GM12878 (cell line): ENCODE measurements at regions of chr12 and their contacts with region 1.

Region 1: DNA sequence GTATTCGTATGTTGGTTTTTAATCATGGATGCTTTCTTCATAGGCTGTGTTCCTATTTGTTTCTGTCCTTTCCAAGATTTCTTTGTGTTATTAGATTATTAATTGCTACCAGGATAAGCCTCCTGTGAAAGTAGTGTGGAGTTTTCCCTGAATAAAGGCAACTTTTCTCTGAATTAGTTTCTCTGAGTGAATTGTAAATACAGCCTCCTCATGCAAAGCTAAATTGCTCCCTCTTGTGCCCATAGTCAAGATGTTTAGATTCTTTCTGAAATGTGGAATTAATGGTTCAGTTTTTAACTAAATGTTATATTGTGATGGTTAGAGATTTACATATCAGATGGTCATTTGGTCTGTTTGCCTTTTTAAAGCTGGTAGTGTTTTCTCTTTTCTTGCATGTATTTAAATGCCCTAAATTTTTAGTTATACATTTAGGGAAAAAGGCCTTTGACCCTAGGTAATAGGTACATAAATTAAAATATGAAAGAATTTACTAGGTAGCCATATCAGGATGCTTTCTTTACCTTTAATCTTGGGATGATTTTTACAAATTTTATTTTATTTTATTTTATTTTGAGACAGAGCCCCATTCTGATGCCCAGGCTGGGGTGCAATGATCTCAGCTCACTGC is 8.9 kb downstream of the APAF1 start:
- DNase-seq: no peak
- ATAC-seq: peak; percentile 68
- H3K4me3 ChIP-seq: no peak overlapping the region
- H3K27ac ChIP-seq: no peak overlapping the region
- H3K4me1 ChIP-seq: no peaks in the 10 kb centered on the region; the same call in 1 of the 2 replicates
- H3K27me3 ChIP-seq: no peaks in the 10 kb centered on the region
- CTCF ChIP-seq: peak; percentile 52 to 77 (median 54)
- EP300 ChIP-seq: no peak
- POLR2A ChIP-seq: no peak
- RAD21 ChIP-seq: peak; percentile 87

Region 2: GRCh38 chr12:98424726-98425401 is 229.1 kb before region 1 on chr12:
- CTCF ChIA-PET with region 1: interaction called, 3 read pairs
- POLR2A ChIA-PET with region 1: no interaction called
- RAD21 ChIA-PET with region 1: no interaction called
- SMC1A ChIA-PET with region 1: interaction called, 3 read pairs
- in situ Hi-C with region 1: no loop called
- intact Hi-C with region 1: loop called (anchors 2 kb)
- DNase-seq: no peak
- ATAC-seq: peak; percentile 95
- H3K4me3 ChIP-seq: no peak overlapping the region
- H3K27ac ChIP-seq: no peak overlapping the region
- H3K4me1 ChIP-seq: no peaks in the 10 kb centered on the region
- H3K27me3 ChIP-seq: no peaks in the 10 kb centered on the region
- CTCF ChIP-seq: peak; percentile 62 to 71 (median 67)
- EP300 ChIP-seq: no peak
- POLR2A ChIP-seq: no peak
- RAD21 ChIP-seq: peak; percentile 50

Region 3: DNA sequence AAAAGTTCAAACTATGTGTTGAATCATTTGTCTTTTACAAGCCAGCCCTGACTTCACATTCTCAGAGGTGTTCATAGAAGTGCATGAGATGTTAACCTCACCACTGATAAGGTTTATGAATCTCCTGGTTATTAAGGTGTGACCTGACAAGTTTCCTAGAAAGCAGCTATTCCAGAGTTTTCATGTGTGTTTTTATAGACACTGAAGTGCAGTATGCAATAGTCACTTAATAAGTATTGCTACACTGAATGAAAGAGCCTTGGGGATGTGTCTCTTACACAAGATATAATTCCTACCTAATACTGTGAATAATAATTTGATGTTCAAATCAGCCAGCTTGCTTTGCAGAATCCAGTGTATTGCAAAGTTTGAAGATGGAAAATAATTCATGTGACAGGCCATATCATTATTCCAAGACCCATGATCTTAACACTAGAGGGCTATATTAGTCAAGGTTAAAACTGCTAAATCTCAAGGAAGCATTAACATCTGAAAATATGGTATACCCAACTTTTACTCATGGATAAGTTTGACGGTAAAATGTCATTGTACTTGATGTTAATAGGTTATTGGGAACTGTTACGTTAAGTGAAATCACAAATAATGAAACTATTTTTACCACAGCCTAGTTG is 47.5 kb before region 1 on chr12:
- CTCF ChIA-PET with region 1: interaction called, 19 read pairs
- POLR2A ChIA-PET with region 1: interaction called, 4 read pairs
- RAD21 ChIA-PET with region 1: interaction called, 3 read pairs
- SMC1A ChIA-PET with region 1: interaction called, 14 read pairs
- in situ Hi-C with region 1: no loop called
- intact Hi-C with region 1: no loop called
- DNase-seq: no peak
- ATAC-seq: no peak
- H3K4me3 ChIP-seq: no peak overlapping the region
- H3K27ac ChIP-seq: no peak overlapping the region
- H3K4me1 ChIP-seq: no peaks in the 10 kb centered on the region
- H3K27me3 ChIP-seq: no peaks in the 10 kb centered on the region
- CTCF ChIP-seq: peak in 1 of 3 experiments; percentile 42; a peak in 1 of 6 replicates
- EP300 ChIP-seq: no peak
- POLR2A ChIP-seq: no peak
- RAD21 ChIP-seq: peak; percentile 29; the same call in 1 of the 2 replicates

Region 4: GRCh38 chr12:98612696-98613334 is 41.2 kb before region 1 on chr12:
- CTCF ChIA-PET with region 1: interaction called, 19 read pairs
- POLR2A ChIA-PET with region 1: interaction called, 4 read pairs
- RAD21 ChIA-PET with region 1: interaction called, 5 read pairs
- SMC1A ChIA-PET with region 1: interaction called, 14 read pairs
- in situ Hi-C with region 1: no loop called
- intact Hi-C with region 1: no loop called
- DNase-seq: peak; percentile 38
- ATAC-seq: peak; percentile 94
- H3K4me3 ChIP-seq: no peak overlapping the region
- H3K27ac ChIP-seq: peak overlapping the region; percentile 49
- H3K4me1 ChIP-seq: peaks cover 7% of the 10 kb centered on the region; the same call in 1 of the 2 replicates
- H3K27me3 ChIP-seq: no peaks in the 10 kb centered on the region
- CTCF ChIP-seq: 0 out of 6 replicates have a peak, but pooled peaks of 1 of the 3 experiments have one; percentile 8
- EP300 ChIP-seq: no peak
- POLR2A ChIP-seq: no peak
- RAD21 ChIP-seq: no peak

Region 5: GRCh38 chr12:98635657-98636323 is 18.2 kb before region 1 on chr12:
- CTCF ChIA-PET with region 1: interaction called, 17 read pairs
- POLR2A ChIA-PET with region 1: interaction called, 6 read pairs
- RAD21 ChIA-PET with region 1: interaction called, 4 read pairs
- SMC1A ChIA-PET with region 1: interaction called, 21 read pairs
- in situ Hi-C with region 1: no loop called
- intact Hi-C with region 1: no loop called
- DNase-seq: peak; percentile 44
- ATAC-seq: peak; percentile 92
- H3K4me3 ChIP-seq: peak overlapping the region; percentile 16; the same call in 1 of the 2 replicates
- H3K27ac ChIP-seq: peak overlapping the region; percentile 37; the same call in 1 of the 2 replicates
- H3K4me1 ChIP-seq: peaks cover 20% of the 10 kb centered on the region
- H3K27me3 ChIP-seq: no peaks in the 10 kb centered on the region
- CTCF ChIP-seq: no peak
- EP300 ChIP-seq: peak in 1 of 2 experiments; percentile 40; a peak in 1 of 4 replicates
- POLR2A ChIP-seq: no peak
- RAD21 ChIP-seq: no peak

Region 6: DNA sequence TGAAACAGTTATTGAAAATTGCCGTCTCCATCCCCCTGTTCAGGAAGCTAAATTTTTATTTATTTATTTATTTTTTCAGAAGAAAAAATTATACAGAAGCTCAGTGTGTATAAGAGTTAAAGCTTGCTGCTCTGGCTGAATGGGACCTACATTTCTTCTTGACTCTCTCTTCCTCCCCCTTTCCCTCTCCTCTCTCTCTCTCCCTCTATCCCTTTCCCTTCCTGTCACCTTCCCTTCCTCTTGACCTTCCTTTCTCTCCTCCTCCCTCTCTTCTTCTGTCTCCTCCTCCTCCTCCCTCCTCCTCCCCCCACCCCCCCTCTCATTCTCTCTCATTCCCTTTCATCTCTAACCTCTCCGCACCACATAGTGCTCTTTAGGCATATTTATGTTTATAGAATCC is 30.2 kb after region 1 on chr12:
- CTCF ChIA-PET with region 1: no interaction called
- POLR2A ChIA-PET with region 1: no interaction called
- RAD21 ChIA-PET with region 1: no interaction called
- SMC1A ChIA-PET with region 1: no interaction called
- in situ Hi-C with region 1: no loop called
- intact Hi-C with region 1: no loop called
- DNase-seq: no peak
- ATAC-seq: no peak
- H3K4me3 ChIP-seq: no peak overlapping the region
- H3K27ac ChIP-seq: no peak overlapping the region
- H3K4me1 ChIP-seq: no peaks in the 10 kb centered on the region
- H3K27me3 ChIP-seq: no peaks in the 10 kb centered on the region
- CTCF ChIP-seq: no peak
- EP300 ChIP-seq: no peak
- POLR2A ChIP-seq: no peak
- RAD21 ChIP-seq: no peak

Region 7: DNA sequence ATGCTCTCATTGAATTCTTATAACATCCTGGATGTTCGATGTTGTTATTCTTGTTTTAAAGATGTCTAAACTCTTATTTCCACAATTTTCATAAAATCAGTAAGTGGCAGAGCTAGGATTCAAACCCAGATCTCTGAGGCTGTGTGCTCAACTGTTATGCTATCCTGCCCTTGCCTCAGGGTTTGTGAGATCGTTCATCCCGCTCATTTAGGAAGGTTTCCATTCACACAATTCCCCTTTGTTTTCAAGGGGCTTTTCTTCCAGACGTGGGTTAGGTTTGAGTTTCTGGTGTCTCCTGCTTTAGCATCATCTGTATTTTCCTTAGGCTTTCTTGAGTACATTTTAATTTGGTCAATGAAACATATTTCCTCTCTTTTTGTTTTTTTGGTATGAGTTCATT is 60.4 kb after region 1 on chr12:
- CTCF ChIA-PET with region 1: no interaction called
- POLR2A ChIA-PET with region 1: no interaction called
- RAD21 ChIA-PET with region 1: no interaction called
- SMC1A ChIA-PET with region 1: no interaction called
- in situ Hi-C with region 1: no loop called
- intact Hi-C with region 1: no loop called
- DNase-seq: no peak
- ATAC-seq: no peak
- H3K4me3 ChIP-seq: no peak overlapping the region
- H3K27ac ChIP-seq: no peak overlapping the region
- H3K4me1 ChIP-seq: no peaks in the 10 kb centered on the region
- H3K27me3 ChIP-seq: no peaks in the 10 kb centered on the region
- CTCF ChIP-seq: no peak
- EP300 ChIP-seq: no peak
- POLR2A ChIP-seq: no peak
- RAD21 ChIP-seq: no peak